Aorta (tissue), 5 donors: ENCODE measurements at regions of chr6 and their contacts with region 1.

Region 1: DNA sequence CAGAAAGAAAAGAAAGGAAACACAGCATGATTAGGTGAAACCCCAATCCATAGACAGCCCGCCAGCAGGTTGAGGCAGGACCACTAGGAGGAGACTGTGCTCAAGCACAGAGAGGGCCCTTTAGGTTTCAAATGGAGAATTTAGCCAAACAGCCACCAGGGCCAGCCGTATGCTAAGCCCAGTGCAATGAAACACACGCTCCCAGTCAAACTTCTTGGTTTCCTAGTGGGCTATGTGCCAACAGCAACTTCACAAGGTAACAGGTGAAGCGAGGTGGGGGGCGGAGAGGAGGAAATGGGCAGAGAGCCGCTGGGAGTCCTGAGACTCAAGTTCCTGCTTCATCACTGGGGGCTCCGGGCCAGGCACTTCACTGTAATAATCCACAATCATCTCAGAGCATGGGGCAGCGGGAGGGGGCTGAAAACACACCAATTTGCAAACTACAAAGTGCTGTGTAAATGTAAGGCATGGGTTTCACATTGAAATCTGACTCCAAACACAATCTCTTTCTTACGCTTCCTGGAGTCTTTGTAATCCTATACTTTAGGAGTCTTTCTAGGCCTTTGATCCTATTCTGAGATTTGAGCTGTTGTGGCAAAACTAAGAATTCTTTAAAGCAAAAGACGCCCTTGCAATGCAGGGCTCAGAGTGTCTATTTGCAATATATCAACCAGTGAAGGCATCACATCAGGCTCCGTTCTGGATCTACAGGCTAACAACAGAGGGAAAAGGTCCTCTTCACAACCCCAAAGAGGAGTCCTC is 117.3 kb downstream of the OPRM1 start:
- DNase-seq: peak in 1 of 2 donors; percentile 61
- ATAC-seq: no peak
- H3K4me3 ChIP-seq: no peak overlapping the region
- H3K27ac ChIP-seq: no peak overlapping the region
- H3K4me1 ChIP-seq: no peaks in the 10 kb centered on the region
- H3K27me3 ChIP-seq: no peaks in the 10 kb centered on the region

Region 2: DNA sequence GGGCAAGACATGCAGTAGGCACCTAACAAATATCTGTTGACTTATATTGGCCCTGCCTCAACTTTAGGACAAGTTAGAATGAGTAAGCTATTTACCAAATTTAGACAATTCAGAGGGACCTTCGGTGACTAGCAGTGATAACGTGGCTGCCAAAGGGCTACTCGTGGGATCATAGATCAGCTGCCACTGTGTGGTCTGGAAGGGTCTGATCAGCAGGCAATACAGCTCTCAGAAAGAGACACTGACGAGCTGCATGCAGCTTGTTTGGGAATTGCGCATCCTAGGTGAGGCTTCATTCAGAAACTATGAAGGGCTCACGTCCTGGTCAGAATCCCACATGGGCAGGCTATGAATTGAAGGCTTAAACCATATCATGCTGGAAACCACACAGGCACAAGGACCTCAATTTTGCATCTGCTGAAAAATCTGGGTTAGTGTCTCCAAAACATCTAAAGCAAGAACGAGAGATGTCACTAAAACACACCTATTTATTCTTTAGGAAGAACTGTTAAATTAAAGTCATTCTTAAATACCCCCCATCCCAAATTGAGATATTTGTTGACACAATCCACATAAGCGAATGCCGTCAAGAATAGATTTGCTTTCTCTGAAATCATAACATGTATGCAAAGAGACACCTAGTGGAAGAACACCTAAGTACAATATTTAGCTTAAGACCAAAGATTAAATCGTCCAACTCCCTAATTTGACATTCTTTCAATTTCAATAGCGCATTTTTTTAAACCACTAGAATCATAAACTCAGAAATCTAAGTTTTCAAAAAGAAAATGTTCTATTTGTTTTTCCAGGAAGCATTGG is 120.7 kb after region 1 on chr6:
- intact Hi-C with region 1: loop called (anchors 2 to 5 kb)
- DNase-seq: no peak
- ATAC-seq: no peak
- H3K4me3 ChIP-seq: no peak overlapping the region
- H3K27ac ChIP-seq: no peak overlapping the region
- H3K4me1 ChIP-seq: peaks cover 0 to 7% of the 10 kb centered on the region in 2 donors
- H3K27me3 ChIP-seq: no peaks in the 10 kb centered on the region